Common myeloid progenitor, CD34-positive (primary cell): ENCODE measurements at regions of chr4 and their contacts with region 1.

Region 1: GRCh38 chr4:119041951-119042560 is 93.6 kb upstream of the MYOZ2 start:
- DNase-seq: peak; percentile 78 to 87 (median 84)
- H3K4me3 ChIP-seq: no peak overlapping the region
- H3K27ac ChIP-seq: no peak overlapping the region
- H3K4me1 ChIP-seq: peaks cover 0 to 6% (median 0%) of the 10 kb centered on the region in 4 experiments
- H3K27me3 ChIP-seq: no peaks in the 10 kb centered on the region

Region 2: GRCh38 chr4:118964891-118965411 is 77.1 kb before region 1 on chr4:
- CTCF ChIA-PET with region 1: no interaction called
- POLR2A ChIA-PET with region 1: no interaction called
- DNase-seq: no peak
- H3K4me3 ChIP-seq: no peak overlapping the region
- H3K27ac ChIP-seq: no peak overlapping the region
- H3K4me1 ChIP-seq: peaks cover 8 to 20% (median 11%) of the 10 kb centered on the region in 4 experiments
- H3K27me3 ChIP-seq: no peaks in the 10 kb centered on the region

Region 3: GRCh38 chr4:119212234-119212963 is 170.3 kb after region 1 on chr4 and contains the start of gene USP53:
- CTCF ChIA-PET with region 1: interaction called, 23 read pairs
- POLR2A ChIA-PET with region 1: no interaction called
- DNase-seq: peak; percentile 96 to 98 (median 98)
- H3K4me3 ChIP-seq: peak within 1 kb of the TSS; percentile 80 to 97 (median 92)
- H3K27ac ChIP-seq: peak within 1 kb of the TSS; percentile 82 to 87
- H3K4me1 ChIP-seq: peaks cover 0 to 25% (median 9%) of the 10 kb centered on the region in 4 experiments
- H3K27me3 ChIP-seq: no peaks in the 10 kb centered on the region

Region 4: GRCh38 chr4:119289313-119289712 is 247.3 kb after region 1 on chr4:
- CTCF ChIA-PET with region 1: interaction called, 10 read pairs
- POLR2A ChIA-PET with region 1: no interaction called
- DNase-seq: no peak
- H3K4me3 ChIP-seq: no peak overlapping the region
- H3K27ac ChIP-seq: no peak overlapping the region
- H3K4me1 ChIP-seq: peaks cover 0 to 8% (median 2%) of the 10 kb centered on the region in 4 experiments
- H3K27me3 ChIP-seq: no peaks in the 10 kb centered on the region